ENCODE measurements at regions of chr9 and their contacts with region 1.

Region 1: GRCh38 chr9:137223078-137223970 is 1.3 kb upstream of the RNF208 start:
- DNase-seq: peak; percentile 99
- ATAC-seq: peak; percentile 91
- H3K4me3 Mint-ChIP-seq: peak overlapping the region; percentile 72
- H3K27ac Mint-ChIP-seq: peak overlapping the region; percentile 72
- H3K4me1 Mint-ChIP-seq: peaks cover 18% of the 10 kb centered on the region
- H3K27me3 Mint-ChIP-seq: no peaks in the 10 kb centered on the region

Region 2: GRCh38 chr9:137046098-137046787 is 177.1 kb before region 1 on chr9 and contains the start of gene NPDC1:
- CTCF ChIA-PET with region 1: interaction called, 10 read pairs
- DNase-seq: peak; percentile 89
- ATAC-seq: peak; percentile 82
- H3K4me3 Mint-ChIP-seq: peak within 1 kb of the TSS; percentile 71
- H3K27ac Mint-ChIP-seq: no peak within 1 kb of the TSS
- H3K4me1 Mint-ChIP-seq: peaks cover 16% of the 10 kb centered on the region
- H3K27me3 Mint-ChIP-seq: peaks cover 43% of the 10 kb centered on the region
- total RNA-seq, gene NPDC1: 30.4 to 55.6 TPM

Region 3: GRCh38 chr9:137095664-137096517 is 127.4 kb before region 1 on chr9:
- CTCF ChIA-PET with region 1: interaction called, 21 read pairs
- DNase-seq: peak; percentile 95
- ATAC-seq: peak; percentile 98
- H3K4me3 Mint-ChIP-seq: peak overlapping the region; percentile 85
- H3K27ac Mint-ChIP-seq: peak overlapping the region; percentile 97
- H3K4me1 Mint-ChIP-seq: peaks cover 30% of the 10 kb centered on the region
- H3K27me3 Mint-ChIP-seq: no peaks in the 10 kb centered on the region

Region 4: DNA sequence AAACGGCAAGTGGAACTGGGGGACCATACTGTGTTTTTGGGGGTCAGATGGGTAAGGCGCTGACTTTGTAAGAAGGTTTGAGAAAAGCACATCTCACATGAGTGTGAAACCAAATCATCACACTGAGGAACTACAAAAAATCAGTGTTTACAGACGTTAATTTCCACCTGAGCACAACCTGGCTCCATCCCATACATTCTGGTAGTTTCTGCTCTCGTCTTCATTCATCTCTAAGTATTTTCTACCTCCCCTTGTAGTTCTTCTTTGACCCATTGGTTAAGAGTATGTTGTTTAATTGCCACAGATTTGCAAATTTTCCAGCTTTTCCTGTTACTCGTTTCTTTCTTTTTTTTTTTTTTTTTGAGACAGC is 99.9 kb before region 1 on chr9:
- CTCF ChIA-PET with region 1: interaction called, 34 read pairs
- DNase-seq: no peak
- ATAC-seq: no peak
- H3K4me3 Mint-ChIP-seq: no peak overlapping the region
- H3K27ac Mint-ChIP-seq: no peak overlapping the region
- H3K4me1 Mint-ChIP-seq: peaks cover 25% of the 10 kb centered on the region
- H3K27me3 Mint-ChIP-seq: no peaks in the 10 kb centered on the region

Region 5: GRCh38 chr9:137188490-137189296 is 34.6 kb before region 1 on chr9 and contains the starts of genes ANAPC2 and SSNA1:
- CTCF ChIA-PET with region 1: interaction called, 22 read pairs
- DNase-seq: peak; percentile 93
- ATAC-seq: peak; percentile 81
- H3K4me3 Mint-ChIP-seq: peak within 1 kb of the TSS; percentile 93
- H3K27ac Mint-ChIP-seq: peak within 1 kb of the TSS; percentile 92
- H3K4me1 Mint-ChIP-seq: peaks cover 35% of the 10 kb centered on the region
- H3K27me3 Mint-ChIP-seq: no peaks in the 10 kb centered on the region
- total RNA-seq, gene ANAPC2: 59.8 to 69.7 TPM
- total RNA-seq, gene SSNA1: 80.2 to 91.3 TPM